ENCODE measurements at regions of chr4 and their contacts with region 1.

Region 1: DNA sequence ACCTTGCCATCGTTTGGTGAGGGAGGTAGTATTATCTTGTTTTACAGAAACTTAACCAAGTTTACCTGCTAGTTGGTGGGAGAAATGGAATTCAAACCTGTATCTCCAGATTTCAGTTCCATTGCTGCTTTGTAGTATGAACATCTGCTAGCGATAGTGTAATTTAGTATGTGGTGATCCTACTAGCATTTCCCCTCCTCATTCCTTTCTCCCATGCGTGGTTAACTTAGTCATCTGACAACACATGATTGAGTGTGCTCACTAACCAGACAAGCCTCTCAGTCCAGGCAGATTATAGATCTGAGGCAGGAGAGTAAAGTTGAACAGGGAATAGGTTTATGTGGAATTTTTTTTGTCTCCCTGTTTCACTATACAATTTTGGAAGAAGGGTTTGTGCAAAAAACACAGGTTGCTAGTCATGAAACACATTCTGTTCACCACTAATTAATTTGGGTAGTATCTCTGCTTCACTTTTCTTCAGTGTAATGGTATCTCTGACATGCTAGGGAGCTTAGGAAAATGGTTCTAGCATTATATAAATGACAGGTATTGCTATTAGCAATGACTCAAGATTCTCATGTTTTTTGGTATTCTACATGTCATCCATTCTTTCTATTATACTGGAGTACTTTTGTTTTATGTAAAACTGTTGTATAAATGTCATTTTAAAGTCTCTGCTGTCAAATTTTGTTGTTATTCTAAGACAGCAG is 21.7 kb downstream of the RBPJ start:
- DNase-seq: no peak
- ATAC-seq: no peak
- H3K4me3 ChIP-seq: no peak overlapping the region
- H3K4me3 Mint-ChIP-seq: no peak overlapping the region
- H3K27ac ChIP-seq: no peak overlapping the region
- H3K27ac Mint-ChIP-seq: no peak overlapping the region
- H3K4me1 ChIP-seq: no peaks in the 10 kb centered on the region
- H3K4me1 Mint-ChIP-seq: peaks cover 49% of the 10 kb centered on the region
- H3K27me3 ChIP-seq: no peaks in the 10 kb centered on the region
- H3K27me3 Mint-ChIP-seq: no peaks in the 10 kb centered on the region
- CTCF ChIP-seq: no peak

Region 2: GRCh38 chr4:26307037-26307800 is 35.3 kb before region 1 on chr4:
- CTCF ChIA-PET with region 1: no interaction called
- POLR2A ChIA-PET with region 1: no interaction called
- intact Hi-C with region 1: no loop called
- DNase-seq: no peak
- ATAC-seq: no peak
- H3K4me3 ChIP-seq: no peak overlapping the region
- H3K4me3 Mint-ChIP-seq: no peak overlapping the region
- H3K27ac ChIP-seq: no peak overlapping the region
- H3K27ac Mint-ChIP-seq: no peak overlapping the region
- H3K4me1 ChIP-seq: peaks cover under 1% of the 10 kb centered on the region in 2 donors
- H3K4me1 Mint-ChIP-seq: peaks cover 5% of the 10 kb centered on the region
- H3K27me3 ChIP-seq: no peaks in the 10 kb centered on the region
- H3K27me3 Mint-ChIP-seq: peaks cover 3% of the 10 kb centered on the region
- CTCF ChIP-seq: no peak

Region 3: GRCh38 chr4:26402458-26402857 is 60.0 kb after region 1 on chr4:
- CTCF ChIA-PET with region 1: no interaction called
- POLR2A ChIA-PET with region 1: no interaction called
- intact Hi-C with region 1: loop called (anchors 2 kb)
- DNase-seq: no peak
- ATAC-seq: no peak
- H3K4me3 ChIP-seq: no peak overlapping the region
- H3K4me3 Mint-ChIP-seq: no peak overlapping the region
- H3K27ac ChIP-seq: no peak overlapping the region
- H3K27ac Mint-ChIP-seq: no peak overlapping the region
- H3K4me1 ChIP-seq: peaks cover 0 to 2% of the 10 kb centered on the region in 2 donors
- H3K4me1 Mint-ChIP-seq: peaks cover 14% of the 10 kb centered on the region
- H3K27me3 ChIP-seq: no peaks in the 10 kb centered on the region
- H3K27me3 Mint-ChIP-seq: no peaks in the 10 kb centered on the region
- CTCF ChIP-seq: no peak

Measured in B cell (primary cell).